Right ventricle myocardium superior (tissue), 1 donor: ENCODE measurements at regions of chr3 and their contacts with region 1.

Region 1: DNA sequence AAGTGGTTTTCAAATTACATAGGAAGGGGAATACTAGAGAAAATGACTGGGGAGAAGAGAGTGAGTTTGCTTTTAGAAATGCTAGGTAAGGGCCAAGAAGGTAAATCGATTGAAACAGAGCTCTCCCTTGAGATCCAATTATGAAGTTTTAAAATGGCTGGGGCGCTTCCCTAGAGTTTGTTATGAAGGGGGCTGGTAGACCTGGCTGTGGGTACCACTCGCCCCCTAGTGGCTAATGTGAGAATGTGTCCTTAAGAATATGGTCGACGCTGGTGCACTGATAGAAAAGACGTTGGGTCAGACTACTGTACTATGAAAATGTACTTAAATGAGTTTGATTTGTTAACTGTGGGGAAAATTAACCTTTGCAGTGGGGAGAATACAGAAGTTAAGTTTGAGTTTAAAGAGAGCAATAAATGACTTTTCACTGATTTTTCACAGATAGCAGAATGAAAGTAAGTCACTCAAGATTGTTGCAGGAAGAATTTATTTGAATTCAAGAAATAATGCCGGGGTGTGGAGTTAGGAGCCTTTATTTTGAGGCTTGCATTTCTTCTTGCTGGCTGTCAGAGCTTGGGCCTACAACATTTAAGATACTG is 9.2 kb downstream of the TMPRSS7 start:
- DNase-seq: no peak
- ATAC-seq: peak; percentile 97

Region 2: DNA sequence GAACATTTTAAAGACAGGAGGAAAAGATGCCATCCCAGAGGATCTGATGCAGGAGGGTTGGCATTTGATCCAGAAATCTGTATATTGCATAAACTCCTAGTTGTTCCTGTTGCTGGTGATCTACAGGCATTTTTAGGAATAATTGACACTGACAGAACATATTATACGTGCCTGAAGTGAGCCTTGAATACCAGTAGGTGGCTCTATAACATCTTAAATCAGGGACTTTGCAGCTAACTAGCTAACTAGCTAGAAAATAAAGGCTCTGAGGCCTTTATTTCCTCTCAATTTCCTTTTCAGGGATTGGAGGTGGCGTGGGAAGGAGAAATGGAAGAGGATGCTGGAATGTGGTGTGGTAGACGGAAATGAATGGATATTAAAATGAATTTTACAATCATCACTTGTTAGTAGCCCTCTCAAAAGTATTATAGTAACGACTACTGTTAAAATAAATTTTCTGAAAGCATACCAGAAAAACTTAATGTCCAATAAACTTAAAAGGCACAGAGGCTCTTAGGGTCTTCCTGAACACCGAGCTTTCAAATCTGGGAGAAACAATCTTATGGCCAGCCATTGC is 374.7 kb before region 1 on chr3:
- intact Hi-C with region 1: loop called (anchors 10 kb)
- DNase-seq: no peak
- ATAC-seq: peak; percentile 93

Region 3: DNA sequence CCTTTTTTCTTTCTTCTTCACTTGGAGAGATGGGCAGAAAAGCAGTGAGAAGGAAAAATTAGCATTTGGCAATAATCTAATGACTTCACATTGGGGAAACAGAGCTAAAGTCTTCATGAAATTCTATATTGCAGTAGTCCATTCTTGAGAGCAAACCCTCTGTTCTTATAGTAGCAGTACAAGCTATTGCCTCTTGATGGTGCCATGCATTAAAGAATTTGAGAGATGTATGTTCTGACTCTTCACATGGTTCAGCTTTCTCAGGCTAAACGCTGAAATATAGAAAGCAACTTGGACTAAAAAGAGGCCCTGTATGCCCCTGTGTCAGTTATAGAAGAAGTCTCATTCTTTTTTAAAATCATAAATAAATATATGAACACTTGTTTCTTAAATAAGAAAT is 148.6 kb before region 1 on chr3:
- intact Hi-C with region 1: no loop called
- DNase-seq: no peak
- ATAC-seq: no peak

Region 4: GRCh38 chr3:111989061-111989678 is 54.5 kb before region 1 on chr3:
- intact Hi-C with region 1: loop called (anchors 2 kb)
- DNase-seq: no peak
- ATAC-seq: peak; percentile 86